ENCODE measurements at regions of chr5 and their contacts with region 1.

Region 1: GRCh38 chr5:43389679-43390329 is 22.4 kb downstream of the CCL28 start:
- DNase-seq: peak; percentile 40
- ATAC-seq: peak; percentile 88
- H3K4me3 ChIP-seq: no peak overlapping the region
- H3K27ac ChIP-seq: no peak overlapping the region
- H3K4me1 ChIP-seq: peaks cover 8% of the 10 kb centered on the region
- H3K27me3 ChIP-seq: no peaks in the 10 kb centered on the region
- CTCF ChIP-seq: peak; percentile 71 to 86 (median 84); a peak in 5 of 6 replicates
- EP300 ChIP-seq: no peak
- POLR2A ChIP-seq: no peak
- RAD21 ChIP-seq: peak; percentile 71

Region 2: DNA sequence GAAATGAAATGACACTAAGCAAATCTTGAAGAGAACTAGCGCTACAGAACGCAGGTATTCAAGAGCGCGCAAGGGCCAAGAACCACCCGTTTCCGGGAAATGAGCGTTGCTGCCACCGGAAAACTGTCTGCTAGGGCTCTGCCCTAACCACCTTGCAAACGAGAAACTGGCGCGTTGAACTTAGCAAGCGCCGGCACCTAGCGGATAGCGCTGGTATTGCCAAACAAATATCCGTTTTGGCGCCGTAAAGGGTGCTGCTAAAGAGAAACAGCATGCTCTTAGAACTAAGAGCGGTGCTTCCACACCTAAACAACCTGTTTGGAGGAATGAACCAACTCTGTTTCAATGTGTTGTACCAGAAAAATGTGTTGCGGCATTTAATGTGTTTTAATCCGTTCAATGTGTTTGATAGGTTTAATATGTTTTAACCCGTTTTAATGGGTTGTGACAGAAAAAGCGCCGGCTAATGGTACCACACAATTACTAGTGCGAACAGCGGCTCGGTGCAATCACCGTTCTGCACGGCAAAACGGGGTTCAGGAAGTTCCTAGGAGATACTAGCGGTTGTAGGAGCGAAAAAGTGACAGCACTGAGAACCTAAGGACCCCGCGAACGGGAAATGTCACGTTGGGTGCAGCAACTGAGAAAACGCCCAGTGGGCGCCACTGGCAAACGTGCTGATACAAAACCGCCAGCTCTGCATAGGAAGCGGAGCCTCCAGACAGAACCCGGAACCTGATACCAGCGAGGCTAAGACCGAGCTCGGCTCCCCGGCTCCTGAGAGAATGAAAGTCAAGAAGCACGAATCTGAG is 349.3 kb before region 1 on chr5 and contains the start of gene ANXA2R:
- CTCF ChIA-PET with region 1: interaction called, 11 read pairs
- POLR2A ChIA-PET with region 1: no interaction called
- RAD21 ChIA-PET with region 1: interaction called, 5 read pairs
- SMC1A ChIA-PET with region 1: interaction called, 3 read pairs
- in situ Hi-C with region 1: no loop called
- intact Hi-C with region 1: no loop called
- DNase-seq: no peak
- ATAC-seq: peak; percentile 60
- H3K4me3 ChIP-seq: peak within 1 kb of the TSS; percentile 66
- H3K27ac ChIP-seq: peak within 1 kb of the TSS; percentile 82
- H3K4me1 ChIP-seq: peaks cover 20% of the 10 kb centered on the region
- H3K27me3 ChIP-seq: no peaks in the 10 kb centered on the region
- CTCF ChIP-seq: peak; percentile 83 to 95 (median 92)
- EP300 ChIP-seq: no peak
- POLR2A ChIP-seq: peak; percentile 27; the same call in 1 of the 2 replicates
- RAD21 ChIP-seq: peak; percentile 92
- polyA plus RNA-seq, gene ANXA2R: 3.2 to 4.5 TPM

Region 3: DNA sequence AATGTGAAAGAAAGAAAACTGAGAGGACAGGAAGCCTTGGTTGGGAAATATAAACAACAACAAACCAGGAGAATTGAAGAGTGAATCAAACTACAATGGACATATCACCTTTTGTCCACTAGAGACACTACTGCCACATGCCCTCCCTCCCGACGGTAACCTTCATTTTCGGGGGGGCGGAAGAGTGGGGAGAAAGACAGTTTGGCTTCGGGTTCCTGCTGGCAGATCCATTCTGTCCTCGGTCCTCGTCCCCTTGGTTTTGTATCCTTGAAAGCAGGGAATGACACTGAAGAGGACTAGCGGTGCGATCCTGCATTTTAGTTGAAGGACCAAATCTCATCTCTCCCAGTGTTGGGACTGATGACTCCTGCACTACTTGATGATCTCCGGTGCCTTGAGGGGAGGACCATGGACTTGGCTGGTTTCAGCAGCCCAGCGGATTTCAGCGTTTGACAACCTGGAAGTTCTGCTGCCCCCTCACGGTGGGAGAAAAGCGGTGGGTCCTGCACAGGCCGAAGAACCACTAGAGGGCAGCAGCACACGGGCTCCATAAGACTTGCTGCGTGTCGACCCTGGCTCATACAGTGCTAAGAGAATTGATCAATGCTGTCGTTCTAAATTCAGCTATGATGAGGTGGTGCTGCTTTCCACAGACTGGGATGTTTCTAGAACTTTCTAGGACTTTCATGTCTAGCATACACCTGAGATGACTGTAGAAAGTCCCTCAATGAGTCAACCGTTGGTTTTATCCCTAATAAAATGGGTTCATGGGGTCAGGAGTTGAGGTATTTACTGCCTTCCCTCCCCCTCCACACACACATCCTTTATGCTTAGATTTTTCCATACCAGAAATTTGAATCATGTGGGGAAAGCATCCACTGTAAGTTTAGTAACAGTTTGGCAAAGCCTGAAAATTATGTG is 284.2 kb before region 1 on chr5:
- CTCF ChIA-PET with region 1: interaction called, 124 read pairs
- POLR2A ChIA-PET with region 1: interaction called, 4 read pairs
- RAD21 ChIA-PET with region 1: interaction called, 15 read pairs
- SMC1A ChIA-PET with region 1: interaction called, 31 read pairs
- in situ Hi-C with region 1: loop called (anchors 10 kb)
- intact Hi-C with region 1: loop called (anchors 1 kb)
- DNase-seq: peak; percentile 79
- ATAC-seq: peak; percentile 99
- H3K4me3 ChIP-seq: peak overlapping the region; percentile 73
- H3K27ac ChIP-seq: peak overlapping the region; percentile 55
- H3K4me1 ChIP-seq: peaks cover 5% of the 10 kb centered on the region
- H3K27me3 ChIP-seq: no peaks in the 10 kb centered on the region
- CTCF ChIP-seq: peak; percentile 100
- EP300 ChIP-seq: no peak
- POLR2A ChIP-seq: peak; percentile 26; the same call in 1 of the 2 replicates
- RAD21 ChIP-seq: peak; percentile 93

Region 4: GRCh38 chr5:43227655-43228054 is 162.1 kb before region 1 on chr5:
- CTCF ChIA-PET with region 1: interaction called, 52 read pairs
- POLR2A ChIA-PET with region 1: interaction called, 5 read pairs
- RAD21 ChIA-PET with region 1: interaction called, 12 read pairs
- SMC1A ChIA-PET with region 1: interaction called, 32 read pairs
- in situ Hi-C with region 1: loop called (anchors 5 kb)
- intact Hi-C with region 1: loop called (anchors 1 kb)
- DNase-seq: no peak
- ATAC-seq: peak; percentile 18; the same call in 1 of the 3 replicates
- H3K4me3 ChIP-seq: no peak overlapping the region
- H3K27ac ChIP-seq: no peak overlapping the region
- H3K4me1 ChIP-seq: no peaks in the 10 kb centered on the region
- H3K27me3 ChIP-seq: no peaks in the 10 kb centered on the region
- CTCF ChIP-seq: peak; percentile 17 to 50 (median 22); a peak in 4 of 6 replicates
- EP300 ChIP-seq: no peak
- POLR2A ChIP-seq: no peak
- RAD21 ChIP-seq: peak; percentile 72

Region 5: GRCh38 chr5:43305948-43306565 is 83.7 kb before region 1 on chr5:
- CTCF ChIA-PET with region 1: interaction called, 34 read pairs
- POLR2A ChIA-PET with region 1: interaction called, 3 read pairs
- RAD21 ChIA-PET with region 1: interaction called, 21 read pairs
- SMC1A ChIA-PET with region 1: interaction called, 20 read pairs
- in situ Hi-C with region 1: no loop called
- intact Hi-C with region 1: loop called (anchors 2 kb)
- DNase-seq: peak; percentile 30
- ATAC-seq: peak; percentile 72
- H3K4me3 ChIP-seq: peak overlapping the region; percentile 27; the same call in 1 of the 2 replicates
- H3K27ac ChIP-seq: no peak overlapping the region
- H3K4me1 ChIP-seq: peaks cover 4% of the 10 kb centered on the region; the same call in 1 of the 2 replicates
- H3K27me3 ChIP-seq: no peaks in the 10 kb centered on the region
- CTCF ChIP-seq: peak; percentile 56 to 69 (median 67)
- EP300 ChIP-seq: no peak
- POLR2A ChIP-seq: no peak
- RAD21 ChIP-seq: peak; percentile 77

Region 6: GRCh38 chr5:43409809-43410271 is 20.0 kb after region 1 on chr5:
- CTCF ChIA-PET with region 1: interaction called, 10 read pairs
- POLR2A ChIA-PET with region 1: interaction called, 4 read pairs
- RAD21 ChIA-PET with region 1: no interaction called
- SMC1A ChIA-PET with region 1: no interaction called
- in situ Hi-C with region 1: no loop called
- intact Hi-C with region 1: no loop called
- DNase-seq: no peak
- ATAC-seq: no peak
- H3K4me3 ChIP-seq: no peak overlapping the region
- H3K27ac ChIP-seq: no peak overlapping the region
- H3K4me1 ChIP-seq: no peaks in the 10 kb centered on the region
- H3K27me3 ChIP-seq: no peaks in the 10 kb centered on the region
- CTCF ChIP-seq: no peak
- EP300 ChIP-seq: no peak
- POLR2A ChIP-seq: no peak
- RAD21 ChIP-seq: no peak

Region 7: GRCh38 chr5:43469702-43470366 is 80.0 kb after region 1 on chr5:
- CTCF ChIA-PET with region 1: no interaction called
- POLR2A ChIA-PET with region 1: no interaction called
- RAD21 ChIA-PET with region 1: no interaction called
- SMC1A ChIA-PET with region 1: no interaction called
- in situ Hi-C with region 1: no loop called
- intact Hi-C with region 1: no loop called
- DNase-seq: no peak
- ATAC-seq: no peak
- H3K4me3 ChIP-seq: no peak overlapping the region
- H3K27ac ChIP-seq: no peak overlapping the region
- H3K4me1 ChIP-seq: no peaks in the 10 kb centered on the region
- H3K27me3 ChIP-seq: no peaks in the 10 kb centered on the region
- CTCF ChIP-seq: no peak
- EP300 ChIP-seq: no peak
- POLR2A ChIP-seq: no peak
- RAD21 ChIP-seq: no peak

Region 8: GRCh38 chr5:43573058-43573457 is 183.3 kb after region 1 on chr5:
- CTCF ChIA-PET with region 1: no interaction called
- POLR2A ChIA-PET with region 1: no interaction called
- RAD21 ChIA-PET with region 1: no interaction called
- SMC1A ChIA-PET with region 1: no interaction called
- in situ Hi-C with region 1: no loop called
- intact Hi-C with region 1: no loop called
- DNase-seq: no peak
- ATAC-seq: no peak
- H3K4me3 ChIP-seq: no peak overlapping the region
- H3K27ac ChIP-seq: no peak overlapping the region
- H3K4me1 ChIP-seq: no peaks in the 10 kb centered on the region
- H3K27me3 ChIP-seq: no peaks in the 10 kb centered on the region
- CTCF ChIP-seq: no peak
- EP300 ChIP-seq: no peak
- POLR2A ChIP-seq: no peak
- RAD21 ChIP-seq: no peak